Gastrocnemius medialis (tissue), 4 donors: ENCODE measurements at regions of chr11 and their contacts with region 1.

Region 1: DNA sequence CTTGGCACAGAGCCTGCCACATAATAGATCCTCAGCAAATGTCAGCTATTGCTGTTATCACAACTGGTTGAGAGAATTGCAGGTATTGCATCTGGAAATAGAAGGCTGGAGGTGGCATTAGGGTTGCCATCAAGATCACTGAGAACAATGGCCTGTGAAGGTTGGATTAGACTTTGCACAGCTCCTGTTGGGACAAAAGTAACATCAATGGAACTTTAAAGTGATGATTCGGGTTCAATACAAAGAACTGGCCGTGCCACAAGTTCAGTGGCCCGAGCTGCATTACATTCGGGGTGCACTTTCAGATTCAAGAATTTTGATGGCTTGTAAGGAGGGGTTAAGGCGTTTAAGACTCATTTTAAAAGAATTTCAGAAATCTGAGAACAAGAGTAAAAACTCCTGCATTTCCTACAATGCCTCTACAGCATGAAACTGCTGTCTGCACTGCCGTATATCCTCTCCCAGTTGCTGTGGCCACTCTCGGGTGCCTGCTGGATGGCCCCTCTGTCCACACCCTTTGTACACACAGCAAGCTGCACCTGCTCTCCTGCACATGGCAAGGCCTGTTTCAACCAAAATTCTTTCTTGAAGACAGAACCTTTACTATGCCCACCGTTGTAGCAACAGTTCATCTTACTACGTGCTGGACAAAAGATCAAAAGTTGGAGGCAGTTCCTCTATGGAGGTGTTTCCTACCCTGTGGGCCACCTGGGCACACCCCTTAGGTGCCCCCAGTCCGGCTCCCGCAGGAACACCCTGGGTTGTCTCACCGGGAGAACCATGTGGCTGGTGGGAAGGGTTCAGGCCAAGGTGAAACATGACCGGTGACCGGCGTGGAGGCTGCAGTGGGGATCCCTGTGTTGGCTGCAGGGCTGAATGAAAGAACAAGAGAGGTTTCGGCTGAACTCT is 17.5 kb upstream of the SHANK2 start:
- DNase-seq: no peak
- ATAC-seq: no peak
- H3K4me3 ChIP-seq: no peak overlapping the region
- H3K27ac ChIP-seq: no peak overlapping the region
- H3K4me1 ChIP-seq: no peaks in the 10 kb centered on the region
- H3K27me3 ChIP-seq: peaks cover 2 to 7% (median 5%) of the 10 kb centered on the region in 3 donors
- CTCF ChIP-seq: no peak
- POLR2A ChIP-seq: no peak

Region 2: GRCh38 chr11:71339396-71339881 is 69.6 kb after region 1 on chr11:
- in situ Hi-C with region 1: loop called in 1 of 4 experiments (anchors 10 kb)
- intact Hi-C with region 1: no loop called
- DNase-seq: no peak
- ATAC-seq: no peak
- H3K4me3 ChIP-seq: no peak overlapping the region
- H3K27ac ChIP-seq: no peak overlapping the region
- H3K4me1 ChIP-seq: no peaks in the 10 kb centered on the region
- H3K27me3 ChIP-seq: peaks cover 0 to 7% (median 4%) of the 10 kb centered on the region in 3 donors
- CTCF ChIP-seq: no peak
- POLR2A ChIP-seq: no peak